ENCODE measurements at regions of chr5 and their contacts with region 1.

Region 1: DNA sequence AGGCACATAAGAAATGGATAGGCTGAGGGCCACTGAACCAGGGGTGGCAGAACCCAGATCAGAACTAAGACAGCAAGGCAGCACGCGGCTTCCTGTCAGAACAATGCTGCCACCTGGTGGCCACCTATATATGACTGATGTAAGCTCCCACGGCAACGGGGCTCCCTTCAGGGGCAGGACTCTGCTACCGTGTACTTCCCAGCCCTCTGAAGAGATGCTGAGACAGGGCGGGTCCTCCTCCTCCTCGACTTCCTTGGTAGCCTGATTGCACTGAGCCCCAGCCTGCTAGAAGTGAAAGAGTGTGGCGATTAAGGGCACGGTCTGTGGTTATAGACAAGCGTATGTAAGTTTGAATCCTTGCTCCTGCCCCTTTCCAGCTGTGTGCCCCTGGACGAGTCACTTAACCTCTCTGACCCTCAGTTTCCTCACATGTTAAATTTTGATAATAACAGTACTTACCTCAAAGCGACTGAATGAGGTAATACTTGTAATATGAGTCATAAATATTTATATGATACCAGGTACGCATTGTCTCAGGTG is 13.3 kb downstream of the RPS14 start:
- DNase-seq: peak; percentile 74 to 84
- H3K4me3 ChIP-seq: no peak overlapping the region
- H3K27ac ChIP-seq: no peak overlapping the region
- H3K4me1 ChIP-seq: no peaks in the 10 kb centered on the region
- H3K27me3 ChIP-seq: no peaks in the 10 kb centered on the region
- CTCF ChIP-seq: peak; percentile 93

Region 2: DNA sequence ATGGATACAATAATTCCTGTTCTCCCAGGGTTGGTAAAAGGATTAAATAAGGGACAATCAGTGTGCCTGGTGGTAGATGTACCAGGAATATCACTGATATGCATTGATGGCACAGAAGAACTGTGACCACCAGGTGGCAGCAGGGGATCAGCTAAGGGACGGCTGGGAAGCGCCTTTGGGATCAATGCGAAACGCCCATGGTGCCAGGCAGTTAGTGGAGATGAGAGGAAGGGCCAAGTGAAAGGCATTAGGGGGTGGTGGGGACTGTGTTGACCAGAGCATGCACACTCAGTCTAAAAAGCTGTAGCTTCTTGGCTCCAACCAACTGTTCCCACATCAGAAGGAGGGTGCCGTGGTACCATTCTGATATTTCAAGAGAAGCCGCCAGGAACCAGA is 799.4 kb before region 1 on chr5:
- CTCF ChIA-PET with region 1: no interaction called
- POLR2A ChIA-PET with region 1: no interaction called
- intact Hi-C with region 1: loop called (anchors 5 kb)
- DNase-seq: peak in 1 of 2 experiments; percentile 35
- H3K4me3 ChIP-seq: no peak overlapping the region
- H3K27ac ChIP-seq: no peak overlapping the region
- H3K4me1 ChIP-seq: peaks cover 21% of the 10 kb centered on the region
- H3K27me3 ChIP-seq: no peaks in the 10 kb centered on the region
- CTCF ChIP-seq: peak; percentile 88

Region 3: GRCh38 chr5:149990518-149991376 is 445.5 kb before region 1 on chr5:
- CTCF ChIA-PET with region 1: interaction called, 16 read pairs
- POLR2A ChIA-PET with region 1: no interaction called
- intact Hi-C with region 1: no loop called
- DNase-seq: peak; percentile 62 to 70
- H3K4me3 ChIP-seq: no peak overlapping the region
- H3K27ac ChIP-seq: no peak overlapping the region
- H3K4me1 ChIP-seq: peaks cover 15% of the 10 kb centered on the region
- H3K27me3 ChIP-seq: no peaks in the 10 kb centered on the region
- CTCF ChIP-seq: peak; percentile 97

Region 4: DNA sequence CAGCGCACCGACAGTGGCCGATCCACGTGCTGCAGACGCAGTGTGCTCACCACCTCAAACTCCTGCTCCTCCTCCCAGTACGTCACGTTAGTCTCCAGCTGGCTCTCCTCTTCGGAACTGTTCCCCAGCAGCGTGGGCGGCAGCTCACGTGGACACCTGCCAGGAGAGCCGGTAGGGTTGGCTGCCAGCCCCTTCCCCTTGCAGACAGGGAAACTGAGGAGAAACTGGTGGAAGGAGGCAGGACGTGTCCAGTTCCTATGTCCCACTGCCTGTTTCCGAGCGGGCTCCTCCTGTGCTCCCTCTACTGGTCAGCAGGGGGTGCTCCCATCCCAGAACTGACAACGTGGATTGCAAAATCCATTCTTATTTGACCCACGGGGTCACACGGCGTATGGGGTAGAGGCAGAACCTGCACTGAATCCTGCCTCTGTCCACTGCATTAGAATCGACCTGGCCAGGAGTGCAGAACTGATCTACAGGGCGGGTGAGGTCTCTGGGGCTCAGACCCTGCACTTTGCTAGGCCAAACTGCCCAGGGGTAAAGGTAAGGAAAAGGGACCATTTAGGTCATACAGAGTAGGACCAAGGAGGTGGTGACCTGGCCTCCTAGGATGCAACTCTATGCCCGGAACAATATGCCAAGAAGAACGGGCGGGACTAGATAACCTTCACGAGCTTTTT is 306.3 kb before region 1 on chr5:
- CTCF ChIA-PET with region 1: no interaction called
- POLR2A ChIA-PET with region 1: no interaction called
- intact Hi-C with region 1: loop called (anchors 1 kb)
- DNase-seq: peak; percentile 50 to 72
- H3K4me3 ChIP-seq: peak overlapping the region; percentile 42; the same call in 1 of the 2 replicates
- H3K27ac ChIP-seq: no peak overlapping the region
- H3K4me1 ChIP-seq: no peaks in the 10 kb centered on the region
- H3K27me3 ChIP-seq: no peaks in the 10 kb centered on the region; the same call in 1 of the 2 replicates
- CTCF ChIP-seq: peak; percentile 94

Region 5: DNA sequence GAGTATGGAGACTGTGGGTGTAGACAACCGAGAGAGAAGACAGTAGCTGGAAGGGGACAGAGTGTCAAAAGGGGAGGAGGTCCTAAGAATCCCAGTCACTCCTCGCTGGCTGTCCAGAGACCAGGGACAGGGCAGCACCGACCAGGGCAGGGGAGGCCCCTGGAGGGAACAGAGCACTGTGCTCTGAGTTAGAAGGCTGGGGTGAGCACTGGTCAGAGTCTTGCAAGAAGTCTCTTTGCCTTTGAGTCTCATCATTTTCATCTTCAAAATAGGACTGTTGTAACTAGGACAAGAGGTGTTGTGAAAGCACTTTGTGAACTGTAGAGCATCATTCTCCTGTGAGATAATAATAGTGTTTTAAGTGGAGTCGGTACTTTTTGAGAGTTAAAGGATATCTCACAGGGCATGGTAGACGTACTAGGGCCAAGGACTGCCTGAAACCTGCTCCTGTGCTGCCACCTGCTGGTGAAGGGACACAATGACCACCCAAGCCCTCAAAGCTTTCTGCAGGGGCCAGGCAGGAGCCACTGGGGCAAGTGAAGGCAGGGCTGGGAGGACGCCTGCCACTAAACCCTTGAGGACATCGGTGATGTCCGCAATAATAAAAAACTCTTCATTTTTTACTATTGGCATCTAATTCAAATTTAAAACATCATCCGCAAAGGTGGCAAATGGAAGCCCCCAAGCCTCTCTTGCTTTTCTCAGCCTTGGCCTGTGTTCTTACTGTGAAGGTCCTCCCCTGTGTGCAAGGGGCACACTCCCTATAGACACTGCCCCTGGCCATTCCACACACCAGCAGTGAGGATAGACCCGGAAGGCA is 218.1 kb before region 1 on chr5:
- CTCF ChIA-PET with region 1: no interaction called
- POLR2A ChIA-PET with region 1: no interaction called
- intact Hi-C with region 1: loop called (anchors 1 kb)
- DNase-seq: peak; percentile 51 to 84
- H3K4me3 ChIP-seq: no peak overlapping the region
- H3K27ac ChIP-seq: no peak overlapping the region
- H3K4me1 ChIP-seq: 0 out of 2 replicates have a peak, but pooled peaks cover 7% of the 10 kb centered on the region
- H3K27me3 ChIP-seq: no peaks in the 10 kb centered on the region
- CTCF ChIP-seq: peak; percentile 96

Region 6: GRCh38 chr5:150357326-150358260 is 78.6 kb before region 1 on chr5 and contains the start of gene TCOF1:
- CTCF ChIA-PET with region 1: no interaction called
- POLR2A ChIA-PET with region 1: no interaction called
- intact Hi-C with region 1: loop called (anchors 5 kb)
- DNase-seq: peak; percentile 84 to 99
- H3K4me3 ChIP-seq: peak within 1 kb of the TSS; percentile 92
- H3K27ac ChIP-seq: peak within 1 kb of the TSS; percentile 45
- H3K4me1 ChIP-seq: peaks cover 13% of the 10 kb centered on the region
- H3K27me3 ChIP-seq: no peaks in the 10 kb centered on the region
- CTCF ChIP-seq: no peak
- total RNA-seq, gene TCOF1: 68.4 and 75.3 TPM in 2 replicates